Activated T-helper 2 cell treated with anti-CD3 and anti-CD28 coated beads, Interferon-gamma antibody, Interleukin-2, Interleukin-4, amounts not matched to agents 10 μg/mL and 5 μg/mL and 100 μg/mL, durations not matched to agents 14 hours and 24 hours and 36 hours (primary cell): ENCODE measurements at regions of chr15 and their contacts with region 1.

Region 1: GRCh38 chr15:50686468-50687301 is at the start of gene TRPM7:
- DNase-seq: peak; percentile 88
- H3K4me3 Mint-ChIP-seq: peak within 1 kb of the TSS; percentile 99
- H3K27ac Mint-ChIP-seq: peak within 1 kb of the TSS; percentile 98
- H3K4me1 Mint-ChIP-seq: peaks cover 37% of the 10 kb centered on the region
- H3K27me3 Mint-ChIP-seq: no peaks in the 10 kb centered on the region
- total RNA-seq, gene TRPM7: 42.3 and 43.1 TPM in 2 replicates

Region 2: DNA sequence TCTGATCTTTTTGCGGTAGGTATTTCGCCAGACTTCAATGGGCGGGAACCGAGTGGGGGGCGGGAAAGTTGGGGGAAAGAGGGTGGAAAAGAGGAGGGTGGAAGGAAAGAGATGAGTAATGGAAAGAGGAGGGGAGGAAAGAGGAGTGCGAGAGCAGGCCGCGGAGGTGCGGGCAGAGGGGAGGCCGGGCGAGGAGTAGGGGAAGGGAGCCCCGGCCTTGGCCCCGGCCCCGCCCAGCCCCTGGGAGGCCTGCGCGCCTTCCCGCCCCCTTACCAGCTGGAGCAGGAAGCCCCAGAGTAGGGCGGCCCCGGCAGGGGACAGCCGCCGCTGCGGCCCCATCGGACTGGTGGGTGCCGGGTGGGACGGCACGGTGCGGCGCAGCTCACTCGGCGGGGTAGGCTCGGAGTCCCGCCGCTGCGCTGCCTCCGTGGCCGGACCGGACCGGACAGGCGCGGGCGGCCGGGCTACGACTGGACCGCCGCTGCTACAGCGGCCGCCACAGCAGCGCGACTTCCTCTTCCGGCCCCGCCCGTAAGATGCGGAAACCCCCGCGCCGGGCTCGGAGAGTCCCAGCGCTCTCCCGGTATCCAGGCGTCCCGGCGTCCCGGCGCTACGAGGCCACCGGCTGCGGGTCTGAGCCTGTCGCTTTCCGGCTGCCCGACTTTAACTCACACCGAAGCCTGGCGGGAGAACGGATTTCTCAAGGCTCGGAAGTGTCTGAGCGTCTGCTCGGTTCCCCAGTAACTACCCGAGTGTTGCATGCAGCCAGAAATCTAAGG is 78.7 kb after region 1 on chr15 and contains the start of gene SPPL2A:
- intact Hi-C with region 1: loop called (anchors 1 kb)
- DNase-seq: peak; percentile 78
- H3K4me3 Mint-ChIP-seq: peak within 1 kb of the TSS; percentile 99
- H3K27ac Mint-ChIP-seq: peak within 1 kb of the TSS; percentile 99
- H3K4me1 Mint-ChIP-seq: peaks cover 48% of the 10 kb centered on the region
- H3K27me3 Mint-ChIP-seq: no peaks in the 10 kb centered on the region
- total RNA-seq, gene SPPL2A: 97.3 and 99.0 TPM in 2 replicates

Region 3: GRCh38 chr15:50876989-50877360 is 190.3 kb after region 1 on chr15:
- intact Hi-C with region 1: loop called (anchors 2 kb)
- DNase-seq: peak; percentile 56
- H3K4me3 Mint-ChIP-seq: peak overlapping the region; percentile 54
- H3K27ac Mint-ChIP-seq: peak overlapping the region; percentile 64
- H3K4me1 Mint-ChIP-seq: peaks cover 53% of the 10 kb centered on the region
- H3K27me3 Mint-ChIP-seq: peaks cover 10% of the 10 kb centered on the region

Region 4: GRCh38 chr15:50964075-50964474 is 277.4 kb after region 1 on chr15:
- intact Hi-C with region 1: no loop called
- DNase-seq: no peak
- H3K4me3 Mint-ChIP-seq: no peak overlapping the region
- H3K27ac Mint-ChIP-seq: no peak overlapping the region
- H3K4me1 Mint-ChIP-seq: peaks cover 2% of the 10 kb centered on the region
- H3K27me3 Mint-ChIP-seq: no peaks in the 10 kb centered on the region